ENCODE measurements at regions of chr15 and their contacts with region 1.

Region 1: GRCh38 chr15:59725172-59725486 is 36.0 kb upstream of the BNIP2 start:
- DNase-seq: no peak
- CTCF ChIP-seq: no peak

Region 2: GRCh38 chr15:59553879-59554735 is 171.0 kb before region 1 on chr15:
- in situ Hi-C with region 1: no loop called
- DNase-seq: no peak
- CTCF ChIP-seq: no peak

Region 3: GRCh38 chr15:60162241-60162967 is 437.3 kb after region 1 on chr15:
- in situ Hi-C with region 1: no loop called
- DNase-seq: no peak
- CTCF ChIP-seq: no peak

Region 4: GRCh38 chr15:60326824-60327654 is 601.9 kb after region 1 on chr15:
- in situ Hi-C with region 1: loop called (anchors 10 kb)
- DNase-seq: peak; percentile 41
- CTCF ChIP-seq: peak; percentile 40